Mammary epithelial cell (primary cell): ENCODE measurements at regions of chr6 and their contacts with region 1.

Region 1: DNA sequence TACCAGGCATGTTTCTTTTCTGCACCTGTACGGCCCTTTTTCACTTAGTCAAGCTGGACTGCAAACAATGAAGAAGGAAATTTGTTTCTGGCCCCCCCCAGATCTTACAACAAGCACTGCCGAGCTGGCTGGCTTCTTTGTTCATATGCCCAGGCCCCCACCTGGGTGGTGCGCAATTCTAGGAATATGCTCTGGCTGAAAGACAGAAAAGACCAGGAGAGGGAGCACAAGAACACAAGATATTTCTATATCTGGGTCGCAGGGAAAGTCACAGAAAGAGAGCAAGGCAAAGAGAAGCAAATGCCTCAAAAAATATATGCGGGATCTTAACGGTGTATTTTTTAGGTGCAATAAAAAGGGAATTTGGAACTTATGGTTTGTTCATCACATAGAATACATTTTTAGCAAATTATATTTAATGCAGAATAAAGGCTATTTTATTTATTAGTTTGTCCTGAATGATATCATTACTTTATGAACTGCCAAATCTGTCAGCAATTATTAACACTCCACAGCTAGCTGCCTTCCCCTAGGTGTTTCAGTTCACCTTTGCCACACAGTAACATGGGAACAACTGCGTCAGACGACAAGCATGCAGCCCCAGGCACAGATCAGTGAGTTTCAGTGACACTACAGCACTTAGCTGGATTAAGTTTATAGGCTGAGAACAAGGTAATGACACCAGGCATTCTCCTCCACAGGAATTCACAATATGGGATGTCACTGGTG is 76.5 kb downstream of the GJA10 start:
- DNase-seq: peak; percentile 45
- H3K4me3 ChIP-seq: no peak overlapping the region
- H3K27ac ChIP-seq: no peak overlapping the region
- H3K4me1 ChIP-seq: peaks cover 6% of the 10 kb centered on the region
- H3K27me3 ChIP-seq: no peaks in the 10 kb centered on the region
- CTCF ChIP-seq: peak; percentile 54 to 64

Region 2: DNA sequence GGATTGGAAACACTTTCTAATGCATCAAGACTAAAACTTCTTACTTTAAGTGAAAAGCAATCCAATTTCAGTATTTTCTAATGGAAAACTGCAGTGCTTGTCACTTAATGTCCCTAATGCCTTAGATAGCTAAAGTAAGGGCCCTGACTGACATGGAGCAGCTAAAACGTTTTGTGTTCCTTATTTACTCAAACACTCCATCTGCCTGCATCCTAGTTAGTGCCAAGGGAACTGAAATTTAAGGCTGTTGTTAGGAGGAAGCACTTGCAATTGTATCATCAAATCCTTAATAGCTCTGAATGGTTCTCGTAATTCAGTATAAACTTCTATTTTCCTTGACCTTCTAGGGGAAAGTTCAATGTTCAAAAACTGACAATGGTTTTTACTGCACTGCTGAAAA is 50.9 kb after region 1 on chr6:
- CTCF ChIA-PET with region 1: no interaction called
- dilution Hi-C with region 1: no loop called
- in situ Hi-C with region 1: no loop called
- intact Hi-C with region 1: no loop called
- DNase-seq: no peak
- H3K4me3 ChIP-seq: no peak overlapping the region
- H3K27ac ChIP-seq: no peak overlapping the region
- H3K4me1 ChIP-seq: peaks cover 9% of the 10 kb centered on the region
- H3K27me3 ChIP-seq: no peaks in the 10 kb centered on the region
- CTCF ChIP-seq: no peak

Region 3: DNA sequence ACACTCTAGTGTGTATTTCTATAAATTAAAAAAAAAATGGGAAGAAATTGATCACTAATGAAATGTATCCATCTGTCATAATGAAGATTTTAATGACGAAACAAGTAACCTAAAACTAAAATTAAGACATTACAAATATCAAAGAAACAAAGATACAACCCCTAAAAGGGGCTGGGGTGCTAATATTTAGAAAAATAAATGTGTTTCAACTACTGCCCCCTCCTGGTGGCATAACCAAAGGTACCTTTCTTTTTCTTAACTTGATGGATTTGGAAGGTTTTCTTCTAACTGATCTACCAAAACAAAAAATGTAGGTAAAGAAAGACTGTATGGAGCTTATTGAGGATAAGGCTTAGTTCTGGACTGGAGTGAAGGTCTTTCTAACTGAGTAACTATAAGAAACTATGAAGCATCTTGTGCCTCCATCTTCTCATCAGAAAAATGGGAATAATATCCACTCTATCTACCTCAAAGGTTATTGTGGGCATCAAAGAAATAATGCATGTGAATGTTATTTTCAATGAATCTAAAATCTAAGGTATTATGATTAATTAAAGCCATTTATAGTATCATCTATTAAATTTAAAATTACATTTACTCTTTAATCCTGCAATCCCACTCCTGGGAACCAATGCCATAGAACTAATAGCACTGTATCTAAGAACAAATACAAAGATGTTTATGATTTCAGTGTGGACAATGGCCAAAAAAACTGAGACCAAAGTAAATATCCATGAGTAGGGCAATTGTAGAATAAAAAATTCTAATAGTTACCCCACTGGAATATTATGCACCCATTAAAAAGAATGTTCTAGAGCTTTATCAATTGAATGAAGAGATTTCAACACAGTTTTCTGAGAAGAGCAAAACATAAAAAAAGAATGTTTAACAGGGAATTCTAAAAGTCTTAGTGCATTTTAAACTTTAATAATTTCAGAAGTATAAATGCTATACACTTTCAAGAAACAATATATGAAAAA is 208.7 kb after region 1 on chr6:
- CTCF ChIA-PET with region 1: no interaction called
- dilution Hi-C with region 1: no loop called
- in situ Hi-C with region 1: no loop called
- intact Hi-C with region 1: loop called (anchors 2 kb)
- DNase-seq: no peak
- H3K4me3 ChIP-seq: no peak overlapping the region
- H3K27ac ChIP-seq: no peak overlapping the region
- H3K4me1 ChIP-seq: peaks cover 17% of the 10 kb centered on the region
- H3K27me3 ChIP-seq: no peaks in the 10 kb centered on the region
- CTCF ChIP-seq: peak; percentile 40 to 43

Region 4: DNA sequence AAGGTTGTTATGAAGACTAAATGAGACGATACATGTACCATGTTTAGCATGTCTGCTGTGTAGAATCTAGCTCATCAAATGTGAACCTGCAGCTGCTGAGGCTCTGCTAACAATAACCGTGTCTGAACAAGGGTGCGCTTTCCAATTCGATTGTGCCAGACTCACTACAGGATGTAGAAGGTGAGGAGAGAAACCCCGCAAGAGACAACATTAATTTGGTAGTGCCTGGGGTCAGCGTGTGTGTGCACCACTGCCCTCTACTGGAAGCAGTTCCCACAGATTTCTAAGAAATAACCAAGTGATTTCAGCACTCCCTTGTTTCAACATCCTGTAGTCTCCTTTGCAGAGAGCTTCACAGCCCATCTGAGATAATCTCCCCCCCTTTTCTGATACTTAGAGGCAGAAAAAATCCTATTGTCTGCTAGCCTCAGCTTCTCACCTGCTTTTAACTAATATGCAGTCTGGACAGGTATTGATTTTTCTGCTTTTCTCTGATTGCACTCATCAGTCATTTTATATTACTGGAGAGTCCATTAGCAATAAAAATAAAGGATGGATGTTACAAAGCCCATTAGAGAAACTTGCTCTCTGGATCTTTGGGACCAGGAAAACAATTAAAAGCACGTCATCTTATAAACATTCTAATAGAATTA is 422.6 kb after region 1 on chr6:
- CTCF ChIA-PET with region 1: no interaction called
- dilution Hi-C with region 1: no loop called
- in situ Hi-C with region 1: no loop called
- intact Hi-C with region 1: loop called (anchors 1 kb)
- DNase-seq: peak; percentile 57
- H3K4me3 ChIP-seq: no peak overlapping the region
- H3K27ac ChIP-seq: no peak overlapping the region
- H3K4me1 ChIP-seq: no peaks in the 10 kb centered on the region
- H3K27me3 ChIP-seq: no peaks in the 10 kb centered on the region
- CTCF ChIP-seq: peak; percentile 75 to 80

Region 5: DNA sequence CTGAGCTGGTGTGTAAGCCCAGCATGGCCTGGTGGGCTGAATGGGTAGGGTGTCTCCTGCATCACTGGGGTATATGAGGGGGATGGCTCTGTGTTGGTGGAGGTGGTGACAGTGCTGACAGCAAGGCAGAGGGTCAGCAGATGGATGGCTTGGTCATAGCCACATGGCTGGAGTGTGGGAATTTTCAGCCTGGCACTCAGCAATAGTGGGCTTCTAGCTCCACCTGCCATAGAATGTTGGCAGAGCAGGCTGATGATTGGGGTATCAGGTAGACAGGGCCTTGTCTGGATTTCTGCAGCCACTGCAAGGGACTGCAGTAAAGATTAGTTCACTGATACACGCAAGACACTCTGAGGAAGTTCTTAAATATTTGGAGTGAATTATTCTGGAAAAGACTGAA is 463.3 kb after region 1 on chr6:
- CTCF ChIA-PET with region 1: no interaction called
- dilution Hi-C with region 1: no loop called
- in situ Hi-C with region 1: no loop called
- intact Hi-C with region 1: loop called (anchors 1 kb)
- DNase-seq: no peak
- H3K4me3 ChIP-seq: no peak overlapping the region
- H3K27ac ChIP-seq: no peak overlapping the region
- H3K4me1 ChIP-seq: peaks cover 5% of the 10 kb centered on the region
- H3K27me3 ChIP-seq: no peaks in the 10 kb centered on the region
- CTCF ChIP-seq: peak; percentile 19 to 23